ENCODE measurements at regions of chr4 and their contacts with region 1.

Region 1: GRCh38 chr4:7067452-7068278 is at the start of gene GRPEL1:
- DNase-seq: peak; percentile 100
- ATAC-seq: peak; percentile 96
- H3K4me3 ChIP-seq: peak within 1 kb of the TSS; percentile 95
- H3K4me3 Mint-ChIP-seq: peak within 1 kb of the TSS; percentile 89 to 98 (median 95)
- H3K27ac ChIP-seq: peak within 1 kb of the TSS; percentile 88
- H3K27ac Mint-ChIP-seq: peak within 1 kb of the TSS; percentile 91 to 98 (median 96)
- H3K4me1 ChIP-seq: peaks cover 27% of the 10 kb centered on the region in 2 donors
- H3K4me1 Mint-ChIP-seq: peaks cover 35 to 70% (median 49%) of the 10 kb centered on the region in 7 donors
- H3K27me3 ChIP-seq: no peaks in the 10 kb centered on the region
- H3K27me3 Mint-ChIP-seq: peaks cover 0 to 13% (median 0%) of the 10 kb centered on the region in 5 donors
- total RNA-seq, gene GRPEL1: 34.5 to 53.3 (median 49.1) TPM

Region 2: DNA sequence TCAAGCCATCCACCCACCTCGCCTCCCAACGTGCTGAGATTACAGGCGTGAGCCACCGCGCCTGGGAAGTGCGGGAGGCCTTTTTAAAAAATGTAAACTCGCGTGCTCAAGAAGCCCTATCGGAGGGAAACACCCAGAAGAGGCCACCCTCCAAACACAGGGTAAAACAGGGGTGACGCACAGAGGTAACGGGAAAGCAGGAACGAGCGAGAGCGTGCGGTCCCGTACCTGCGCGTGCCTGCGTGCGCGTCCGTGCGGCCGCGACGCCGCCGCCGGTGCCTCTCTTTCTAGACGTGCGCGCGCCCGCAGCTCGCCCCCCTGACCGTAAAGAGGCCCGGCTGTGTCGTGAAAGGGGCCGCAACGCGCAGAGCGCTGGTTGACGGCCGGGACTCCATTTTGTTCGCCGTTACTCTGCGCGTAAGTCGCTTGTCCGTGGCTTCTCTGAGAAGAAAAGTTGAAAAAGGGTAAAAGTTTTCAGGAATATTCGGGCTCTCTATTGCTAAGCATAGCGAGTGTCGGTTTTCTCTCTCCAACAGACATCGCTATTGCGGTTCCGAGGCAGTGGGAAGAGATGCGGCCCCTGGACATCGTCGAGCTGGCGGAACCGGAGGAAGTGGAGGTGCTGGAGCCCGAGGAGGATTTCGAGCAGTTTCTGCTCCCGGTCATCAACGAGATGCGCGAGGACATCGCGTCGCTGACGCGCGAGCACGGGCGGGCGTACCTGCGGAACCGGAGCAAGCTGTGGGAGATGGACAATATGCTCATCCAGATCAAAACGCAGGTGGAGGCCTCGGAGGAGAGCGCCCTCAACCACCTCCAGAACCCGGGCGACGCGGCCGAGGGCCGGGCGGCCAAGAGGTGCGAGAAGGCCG is 427.1 kb before region 1 on chr4 and contains the start of gene MRFAP1:
- CTCF ChIA-PET with region 1: interaction called, 3 read pairs
- POLR2A ChIA-PET with region 1: interaction called, 26 read pairs
- intact Hi-C with region 1: loop called (anchors 1 kb)
- DNase-seq: peak; percentile 84 to 97 (median 95)
- ATAC-seq: peak; percentile 94
- H3K4me3 ChIP-seq: peak within 1 kb of the TSS; percentile 100
- H3K4me3 Mint-ChIP-seq: peak within 1 kb of the TSS; percentile 94 to 100 (median 99)
- H3K27ac ChIP-seq: peak within 1 kb of the TSS; percentile 97
- H3K27ac Mint-ChIP-seq: peak within 1 kb of the TSS; percentile 99 to 100 (median 99)
- H3K4me1 ChIP-seq: peaks cover 13 to 23% of the 10 kb centered on the region in 2 donors
- H3K4me1 Mint-ChIP-seq: peaks cover 26 to 52% (median 37%) of the 10 kb centered on the region in 7 donors
- H3K27me3 ChIP-seq: no peaks in the 10 kb centered on the region
- H3K27me3 Mint-ChIP-seq: no peaks in the 10 kb centered on the region
- total RNA-seq, gene MRFAP1: 120 to 187 (median 139) TPM

Region 3: DNA sequence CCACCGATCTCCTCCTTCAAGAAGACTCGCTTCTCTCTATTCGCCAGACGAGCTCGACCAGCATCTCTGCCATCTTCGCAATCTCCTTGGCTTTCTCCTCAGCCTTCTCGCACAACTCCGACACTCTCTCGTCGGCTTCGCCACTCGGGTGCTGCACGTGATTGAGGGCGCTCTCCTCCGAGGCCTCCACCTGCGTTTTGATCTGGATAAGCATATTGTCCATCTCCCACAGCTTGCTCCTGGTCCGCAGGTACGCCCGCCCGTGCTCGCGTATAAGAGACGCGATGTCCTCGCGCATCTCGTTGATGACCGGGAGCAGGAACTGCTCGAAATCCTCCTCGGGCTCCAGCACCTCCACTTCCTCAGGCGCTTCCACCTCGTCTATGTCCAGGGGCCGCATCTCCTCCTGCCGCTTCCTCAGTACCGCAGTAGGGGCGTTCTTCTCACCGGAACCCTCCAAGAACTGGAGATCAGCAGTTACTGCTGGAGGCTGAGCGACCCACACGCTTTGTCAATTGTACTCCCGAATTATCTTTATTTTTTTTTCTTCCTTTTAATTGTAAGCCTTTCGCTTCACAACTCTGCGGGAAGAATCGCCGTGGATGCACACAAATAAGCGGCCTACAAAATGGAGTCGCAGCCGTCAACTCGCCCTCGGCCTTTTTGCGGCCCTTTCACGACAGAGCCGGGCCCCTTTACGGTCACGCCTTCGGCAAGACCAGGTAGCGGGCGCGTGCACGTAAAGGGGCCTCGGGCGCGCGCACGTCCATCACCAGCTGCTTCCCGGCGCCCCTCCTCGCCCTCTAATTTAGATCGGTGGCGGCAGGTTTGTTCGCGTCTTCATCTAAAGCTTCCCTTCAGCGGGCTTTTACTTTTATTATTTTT is 358.2 kb before region 1 on chr4 and contains the start of gene MRFAP1L1:
- CTCF ChIA-PET with region 1: interaction called, 3 read pairs
- POLR2A ChIA-PET with region 1: interaction called, 30 read pairs
- intact Hi-C with region 1: loop called in 1 of 2 experiments (anchors 2 kb)
- DNase-seq: peak; percentile 91 to 98 (median 97)
- ATAC-seq: peak; percentile 99
- H3K4me3 ChIP-seq: peak within 1 kb of the TSS; percentile 93
- H3K4me3 Mint-ChIP-seq: peak within 1 kb of the TSS; percentile 96 to 100 (median 98)
- H3K27ac ChIP-seq: peak within 1 kb of the TSS; percentile 86
- H3K27ac Mint-ChIP-seq: peak within 1 kb of the TSS; percentile 95 to 99 (median 98)
- H3K4me1 ChIP-seq: peaks cover 38 to 48% of the 10 kb centered on the region in 2 donors
- H3K4me1 Mint-ChIP-seq: peaks cover 45 to 71% (median 65%) of the 10 kb centered on the region in 7 donors
- H3K27me3 ChIP-seq: no peaks in the 10 kb centered on the region
- H3K27me3 Mint-ChIP-seq: peaks cover 0 to 8% (median 0%) of the 10 kb centered on the region in 5 donors
- total RNA-seq, gene MRFAP1L1: 24.8 to 124 (median 73.6) TPM

Region 4: DNA sequence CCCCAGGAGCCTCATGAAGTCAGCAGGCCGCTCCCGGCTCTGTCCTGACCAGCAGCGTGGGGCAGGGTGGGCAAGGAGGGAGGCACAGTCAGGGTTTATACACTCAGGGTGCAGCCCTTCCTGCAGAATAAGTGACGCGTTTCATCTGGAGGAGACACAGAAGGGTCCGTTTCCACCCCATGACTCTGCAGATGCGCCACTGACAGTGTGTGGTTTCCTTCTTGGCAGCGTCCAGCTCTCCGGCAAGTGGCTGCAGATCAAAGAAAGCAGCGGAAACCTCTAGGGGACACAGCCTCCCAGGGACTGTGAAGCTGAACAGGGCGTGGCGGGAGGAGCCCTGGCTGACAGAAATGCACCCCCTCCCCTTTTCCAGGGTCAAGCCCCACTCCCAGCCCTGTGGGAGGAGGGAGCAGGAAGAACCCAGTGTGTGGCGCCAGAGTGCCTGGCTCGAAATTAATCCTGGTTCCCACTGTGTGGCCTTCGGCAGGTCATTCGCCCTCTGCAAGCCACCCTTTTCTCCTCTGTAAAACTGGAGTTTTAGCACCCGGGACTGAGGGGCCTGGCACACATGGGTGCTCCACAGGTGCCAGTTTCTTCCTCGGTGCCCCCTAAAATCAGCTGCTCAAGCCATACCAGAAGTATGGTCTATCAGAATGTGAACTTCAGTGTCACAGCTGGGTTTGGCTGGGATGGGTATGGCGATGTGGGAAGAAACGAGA is 175.3 kb before region 1 on chr4:
- CTCF ChIA-PET with region 1: no interaction called
- POLR2A ChIA-PET with region 1: no interaction called
- intact Hi-C with region 1: loop called in 1 of 2 experiments (anchors 1 kb)
- DNase-seq: peak in 2 of 9 donors; percentile 21 to 25
- ATAC-seq: peak; percentile 79
- H3K4me3 ChIP-seq: peak overlapping the region; percentile 18
- H3K4me3 Mint-ChIP-seq: peak overlapping the region; percentile 10 to 72 (median 63)
- H3K27ac ChIP-seq: no peak overlapping the region
- H3K27ac Mint-ChIP-seq: peak overlapping the region in 8 of 9 donors; percentile 51 to 90 (median 68)
- H3K4me1 ChIP-seq: peaks cover 13 to 17% of the 10 kb centered on the region in 2 donors
- H3K4me1 Mint-ChIP-seq: peaks cover 13 to 41% (median 28%) of the 10 kb centered on the region in 7 donors
- H3K27me3 ChIP-seq: no peaks in the 10 kb centered on the region
- H3K27me3 Mint-ChIP-seq: no peaks in the 10 kb centered on the region

Region 5: DNA sequence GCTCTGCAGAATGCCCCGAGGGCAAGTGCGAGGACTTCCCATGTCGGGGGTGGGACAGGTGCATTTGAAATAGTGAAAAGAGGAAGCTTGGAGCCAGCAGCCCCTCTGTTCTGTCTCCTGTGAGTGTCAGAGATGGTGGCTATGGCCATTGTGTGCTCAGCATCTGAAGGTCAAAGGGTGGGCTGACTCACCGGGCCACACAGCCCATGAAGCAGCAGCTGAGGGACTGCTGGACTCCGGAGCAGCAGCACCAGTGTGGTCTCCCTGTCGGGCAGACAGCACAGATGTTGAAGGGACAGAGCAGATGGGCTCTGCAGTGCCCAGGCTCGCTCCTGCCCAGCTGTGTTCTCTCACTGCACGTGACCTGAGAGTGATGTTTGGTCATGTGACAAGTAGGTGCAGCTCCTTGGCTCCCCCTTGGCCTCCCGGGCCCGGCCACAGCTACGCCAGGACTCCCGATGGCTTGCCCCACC is 104.5 kb before region 1 on chr4:
- CTCF ChIA-PET with region 1: no interaction called
- POLR2A ChIA-PET with region 1: no interaction called
- intact Hi-C with region 1: no loop called
- DNase-seq: no peak
- ATAC-seq: no peak
- H3K4me3 ChIP-seq: no peak overlapping the region
- H3K4me3 Mint-ChIP-seq: no peak overlapping the region
- H3K27ac ChIP-seq: no peak overlapping the region
- H3K27ac Mint-ChIP-seq: no peak overlapping the region
- H3K4me1 ChIP-seq: peaks cover 0 to 7% of the 10 kb centered on the region in 2 donors
- H3K4me1 Mint-ChIP-seq: peaks cover 14 to 59% (median 52%) of the 10 kb centered on the region in 7 donors
- H3K27me3 ChIP-seq: no peaks in the 10 kb centered on the region
- H3K27me3 Mint-ChIP-seq: no peaks in the 10 kb centered on the region

Region 6: DNA sequence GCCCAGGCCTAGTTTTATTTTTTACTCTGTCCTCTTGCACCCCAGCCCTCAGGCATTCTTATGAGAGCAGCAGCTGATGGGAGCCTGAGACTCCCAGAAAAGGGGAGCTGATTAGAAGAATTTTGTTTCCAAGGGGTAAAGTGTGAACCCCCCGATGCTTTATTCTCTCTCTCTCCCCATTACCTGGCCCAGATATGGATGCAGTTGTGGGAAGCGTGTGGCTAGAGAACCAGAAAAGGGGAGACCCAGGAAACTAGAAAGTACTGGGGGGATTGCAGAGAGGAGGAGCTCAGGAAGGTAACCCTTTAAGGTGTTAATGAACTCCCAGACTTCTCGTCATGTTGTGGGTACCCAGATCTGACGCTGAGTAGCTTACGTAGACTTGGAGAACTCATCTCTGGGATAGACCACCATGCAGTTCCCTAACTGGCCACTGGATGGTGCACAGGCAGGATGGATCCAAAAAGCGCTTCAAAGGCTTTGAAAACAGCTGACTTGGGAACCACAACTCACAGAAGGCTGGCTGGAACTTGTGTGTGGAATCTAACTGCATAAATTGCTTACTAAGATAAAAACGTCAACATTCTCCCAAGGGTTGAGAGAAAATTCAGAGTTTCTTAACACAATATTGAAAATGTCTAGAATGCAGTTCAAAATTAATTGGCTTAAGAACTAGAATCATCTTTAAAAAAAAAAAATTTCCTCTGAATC is 93.4 kb before region 1 on chr4:
- CTCF ChIA-PET with region 1: interaction called, 17 read pairs
- POLR2A ChIA-PET with region 1: interaction called, 5 read pairs
- intact Hi-C with region 1: loop called (anchors 1 kb)
- DNase-seq: peak; percentile 55 to 82 (median 74)
- ATAC-seq: peak; percentile 100
- H3K4me3 ChIP-seq: no peak overlapping the region
- H3K4me3 Mint-ChIP-seq: peak overlapping the region in 3 of 10 donors; percentile 11 to 45 (median 18)
- H3K27ac ChIP-seq: no peak overlapping the region
- H3K27ac Mint-ChIP-seq: peak overlapping the region in 5 of 9 donors; percentile 43 to 86 (median 69)
- H3K4me1 ChIP-seq: peaks cover 0 to 9% of the 10 kb centered on the region in 2 donors
- H3K4me1 Mint-ChIP-seq: peaks cover 5 to 38% (median 22%) of the 10 kb centered on the region in 7 donors
- H3K27me3 ChIP-seq: no peaks in the 10 kb centered on the region
- H3K27me3 Mint-ChIP-seq: no peaks in the 10 kb centered on the region

Region 7: DNA sequence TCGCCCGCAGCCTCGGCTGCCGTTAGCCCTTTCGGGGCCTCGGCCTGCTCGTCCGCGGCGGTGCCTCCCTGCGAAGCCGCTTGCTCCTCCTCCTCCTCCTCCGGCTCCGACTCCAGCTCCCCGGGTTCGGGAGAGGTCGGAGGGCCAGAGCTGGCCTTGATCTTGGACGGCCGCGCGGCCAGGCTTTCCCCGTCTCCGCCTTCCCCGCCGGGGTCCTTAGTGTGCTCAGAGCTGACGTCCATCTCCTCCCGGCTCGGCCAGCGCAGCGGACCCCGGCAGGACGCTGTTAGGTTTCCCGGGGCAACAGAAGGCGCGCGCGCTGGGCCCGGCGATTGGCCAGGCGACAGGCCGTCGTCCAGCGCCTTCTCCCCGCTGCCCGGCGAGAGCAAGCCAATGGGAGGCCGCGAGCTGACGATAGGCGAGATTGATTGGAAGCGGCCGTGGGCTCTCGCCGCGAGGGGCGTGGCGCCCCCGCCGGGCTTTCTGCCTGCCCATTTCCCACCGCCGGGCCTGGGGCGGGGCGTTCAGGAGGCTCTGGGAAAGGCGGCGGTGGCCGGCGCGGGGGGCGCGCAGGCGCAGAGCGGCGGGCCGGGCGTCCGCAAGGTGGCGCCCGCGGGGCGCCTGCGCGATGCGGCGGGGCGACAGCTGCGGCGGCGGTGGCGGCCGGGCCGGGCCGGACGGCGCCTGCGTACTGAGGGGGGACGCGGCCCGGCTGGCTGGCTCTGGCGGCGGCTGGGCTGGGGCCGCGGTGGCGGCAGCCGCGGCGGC is 24.8 kb before region 1 on chr4 and contains the start of gene TADA2B:
- CTCF ChIA-PET with region 1: interaction called, 73 read pairs
- POLR2A ChIA-PET with region 1: interaction called, 173 read pairs
- intact Hi-C with region 1: loop called (anchors 1 kb)
- DNase-seq: peak; percentile 79 to 99 (median 88)
- ATAC-seq: peak; percentile 89
- H3K4me3 ChIP-seq: peak within 1 kb of the TSS; percentile 84
- H3K4me3 Mint-ChIP-seq: peak within 1 kb of the TSS; percentile 90 to 95 (median 92)
- H3K27ac ChIP-seq: peak within 1 kb of the TSS; percentile 85
- H3K27ac Mint-ChIP-seq: peak within 1 kb of the TSS; percentile 80 to 92 (median 89)
- H3K4me1 ChIP-seq: peaks cover 33 to 40% of the 10 kb centered on the region in 2 donors
- H3K4me1 Mint-ChIP-seq: peaks cover 38 to 58% (median 52%) of the 10 kb centered on the region in 7 donors
- H3K27me3 ChIP-seq: no peaks in the 10 kb centered on the region
- H3K27me3 Mint-ChIP-seq: peaks cover 0 to 15% (median 0%) of the 10 kb centered on the region in 5 donors
- total RNA-seq, gene TADA2B: 26.8 to 49.0 (median 41.5) TPM